Transverse colon (tissue), 4 donors: ENCODE measurements at regions of chr1 and their contacts with region 1.

Region 1: DNA sequence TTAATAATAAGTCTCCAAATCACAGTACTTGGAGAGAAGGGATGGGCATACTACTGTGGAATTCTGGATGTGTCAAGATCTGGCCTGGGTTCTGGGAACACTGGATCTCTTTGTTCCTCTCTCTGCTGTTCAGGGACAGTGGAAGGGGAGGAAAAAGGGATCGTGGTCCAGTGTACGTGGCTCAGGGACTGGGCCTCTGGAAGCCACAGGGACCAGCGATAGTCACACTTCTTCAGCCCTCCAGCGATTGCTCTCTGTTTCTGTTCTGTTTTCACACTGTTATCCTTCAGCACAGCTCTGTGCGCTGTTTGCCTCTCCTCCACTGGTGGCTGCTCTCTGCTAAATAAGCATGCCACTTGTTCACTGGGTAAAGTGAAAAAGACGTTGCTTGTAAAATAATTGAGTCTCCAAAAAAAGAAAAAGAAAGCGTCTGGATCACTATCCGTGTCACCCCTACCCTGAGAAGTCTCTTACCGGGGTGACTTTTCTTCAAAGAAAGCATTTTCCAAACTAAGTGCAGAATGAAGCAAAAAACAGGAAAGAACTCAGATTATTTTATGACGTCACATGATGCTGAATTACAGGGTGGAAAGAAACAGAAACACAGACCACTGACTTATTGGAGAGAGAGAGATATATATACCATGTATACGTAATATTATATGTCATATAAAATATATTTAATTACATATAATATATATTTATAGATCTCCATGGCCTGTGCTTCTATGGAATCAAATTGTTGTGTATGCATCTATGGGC is 279.4 kb downstream of the RGS7 start:
- DNase-seq: no peak
- H3K4me3 ChIP-seq: no peak overlapping the region
- H3K27ac ChIP-seq: peak overlapping the region in 1 of 4 donors; percentile 29
- H3K4me1 ChIP-seq: no peaks in the 10 kb centered on the region
- H3K27me3 ChIP-seq: no peaks in the 10 kb centered on the region
- CTCF ChIP-seq: no peak
- EP300 ChIP-seq: no peak
- POLR2A ChIP-seq: no peak

Region 2: DNA sequence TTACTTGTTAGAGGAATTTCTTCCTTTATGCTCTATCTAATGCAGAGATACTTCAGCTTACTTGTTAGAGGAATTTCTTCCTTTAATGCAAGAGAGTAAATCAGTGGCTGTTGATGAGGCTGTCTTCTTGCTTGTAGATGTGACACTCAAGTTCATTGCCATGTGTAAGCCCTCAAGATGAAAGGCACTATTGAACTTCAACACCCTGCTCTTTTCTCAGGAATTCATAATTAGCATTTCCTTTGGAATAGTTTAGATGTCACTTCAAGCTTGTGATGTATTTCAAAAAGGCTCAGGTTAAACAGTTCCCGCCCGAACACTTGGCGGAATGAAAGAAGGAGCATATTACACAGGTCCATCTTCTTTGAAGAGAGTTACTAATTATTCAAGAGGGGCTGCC is 27.6 kb after region 1 on chr1:
- in situ Hi-C with region 1: no loop called
- intact Hi-C with region 1: loop called (anchors 1 kb)
- DNase-seq: no peak
- H3K4me3 ChIP-seq: no peak overlapping the region
- H3K27ac ChIP-seq: no peak overlapping the region
- H3K4me1 ChIP-seq: no peaks in the 10 kb centered on the region
- H3K27me3 ChIP-seq: no peaks in the 10 kb centered on the region
- CTCF ChIP-seq: no peak
- EP300 ChIP-seq: no peak
- POLR2A ChIP-seq: no peak